Breast epithelium (tissue), 4 donors: ENCODE measurements at regions of chr3 and their contacts with region 1.

Region 1: GRCh38 chr3:2727610-2728318 is 382.4 kb downstream of the IL5RA start:
- DNase-seq: no peak
- H3K4me3 ChIP-seq: no peak overlapping the region
- H3K27ac ChIP-seq: no peak overlapping the region
- H3K4me1 ChIP-seq: no peaks in the 10 kb centered on the region
- H3K27me3 ChIP-seq: no peaks in the 10 kb centered on the region
- CTCF ChIP-seq: no peak
- POLR2A ChIP-seq: no peak

Region 2: GRCh38 chr3:2706836-2707210 is 20.9 kb before region 1 on chr3:
- intact Hi-C with region 1: loop called (anchors 1 kb)
- DNase-seq: no peak
- H3K4me3 ChIP-seq: no peak overlapping the region
- H3K27ac ChIP-seq: no peak overlapping the region
- H3K4me1 ChIP-seq: no peaks in the 10 kb centered on the region
- H3K27me3 ChIP-seq: no peaks in the 10 kb centered on the region
- CTCF ChIP-seq: no peak
- POLR2A ChIP-seq: no peak

Region 3: DNA sequence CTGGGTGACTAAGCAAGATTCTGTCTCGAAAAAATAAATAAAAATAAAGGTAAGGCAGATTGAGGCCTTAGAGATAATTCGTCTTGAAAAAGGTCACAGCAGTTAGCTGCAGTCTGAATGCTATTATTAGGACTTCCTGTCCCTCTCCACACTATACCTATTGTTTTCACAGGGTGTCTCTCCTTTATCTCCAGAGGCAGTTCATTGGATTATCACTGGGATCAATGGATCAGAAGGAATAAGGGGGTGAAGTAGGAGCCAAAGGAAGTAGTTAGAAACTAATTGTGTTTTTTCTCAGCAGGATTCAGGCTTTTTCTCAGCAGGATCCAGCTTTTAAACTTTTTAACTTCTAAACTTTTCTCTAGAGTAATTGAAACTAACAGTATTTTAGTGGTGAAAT is 55.5 kb after region 1 on chr3:
- intact Hi-C with region 1: no loop called
- DNase-seq: no peak
- H3K4me3 ChIP-seq: no peak overlapping the region
- H3K27ac ChIP-seq: no peak overlapping the region
- H3K4me1 ChIP-seq: no peaks in the 10 kb centered on the region
- H3K27me3 ChIP-seq: no peaks in the 10 kb centered on the region
- CTCF ChIP-seq: no peak
- POLR2A ChIP-seq: no peak

Region 4: DNA sequence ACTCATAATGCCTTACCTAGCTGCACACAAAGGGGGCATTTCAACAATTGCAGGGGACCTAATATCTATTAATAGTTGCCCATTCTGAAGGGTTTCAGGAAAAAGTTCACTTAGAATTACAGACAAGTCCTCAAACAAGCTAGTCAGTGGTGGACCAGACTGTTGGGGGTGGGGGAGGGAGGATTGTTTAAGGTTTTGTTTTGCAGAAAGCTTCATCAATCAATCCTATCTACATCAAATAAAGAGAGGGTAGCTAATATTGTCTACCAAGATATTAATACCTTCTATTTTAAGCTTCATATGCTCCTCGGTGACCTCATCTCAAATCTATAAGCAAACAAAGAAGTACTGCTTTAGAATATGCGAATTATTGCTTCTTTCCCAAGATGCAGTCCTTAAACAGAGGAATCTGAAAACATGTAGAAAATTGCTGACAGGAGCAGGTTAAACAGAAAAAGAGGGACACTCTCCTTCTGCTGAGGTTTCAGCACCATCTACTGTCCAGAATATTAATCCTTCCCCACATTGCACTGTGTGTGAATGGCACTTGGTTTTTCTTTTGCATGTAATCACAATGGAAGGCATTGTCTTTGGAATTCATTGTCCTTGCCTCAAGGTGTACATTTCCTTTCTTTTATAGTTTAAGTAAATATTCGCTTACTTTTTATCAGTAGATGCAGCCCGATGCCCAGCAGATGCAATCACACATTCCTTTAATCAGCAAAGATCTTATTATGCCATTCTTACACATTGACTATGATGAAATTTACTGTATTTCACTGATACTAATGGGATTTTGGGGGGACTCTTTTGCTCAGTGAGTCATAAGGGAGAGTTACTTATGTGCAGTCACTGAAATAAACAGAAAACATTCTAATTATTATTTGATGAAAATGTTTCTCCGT is 287.7 kb after region 1 on chr3:
- intact Hi-C with region 1: loop called (anchors 5 kb)
- DNase-seq: no peak
- H3K4me3 ChIP-seq: no peak overlapping the region
- H3K27ac ChIP-seq: no peak overlapping the region
- H3K4me1 ChIP-seq: no peaks in the 10 kb centered on the region
- H3K27me3 ChIP-seq: no peaks in the 10 kb centered on the region
- CTCF ChIP-seq: peak in 2 of 3 donors; percentile 39 to 47
- POLR2A ChIP-seq: no peak

Region 5: GRCh38 chr3:3281024-3281423 is 553.3 kb after region 1 on chr3:
- intact Hi-C with region 1: no loop called
- DNase-seq: no peak
- H3K4me3 ChIP-seq: no peak overlapping the region
- H3K27ac ChIP-seq: no peak overlapping the region
- H3K4me1 ChIP-seq: no peaks in the 10 kb centered on the region
- H3K27me3 ChIP-seq: no peaks in the 10 kb centered on the region
- CTCF ChIP-seq: no peak
- POLR2A ChIP-seq: no peak